ENCODE measurements at regions of chr4 and their contacts with region 1.

Region 1: DNA sequence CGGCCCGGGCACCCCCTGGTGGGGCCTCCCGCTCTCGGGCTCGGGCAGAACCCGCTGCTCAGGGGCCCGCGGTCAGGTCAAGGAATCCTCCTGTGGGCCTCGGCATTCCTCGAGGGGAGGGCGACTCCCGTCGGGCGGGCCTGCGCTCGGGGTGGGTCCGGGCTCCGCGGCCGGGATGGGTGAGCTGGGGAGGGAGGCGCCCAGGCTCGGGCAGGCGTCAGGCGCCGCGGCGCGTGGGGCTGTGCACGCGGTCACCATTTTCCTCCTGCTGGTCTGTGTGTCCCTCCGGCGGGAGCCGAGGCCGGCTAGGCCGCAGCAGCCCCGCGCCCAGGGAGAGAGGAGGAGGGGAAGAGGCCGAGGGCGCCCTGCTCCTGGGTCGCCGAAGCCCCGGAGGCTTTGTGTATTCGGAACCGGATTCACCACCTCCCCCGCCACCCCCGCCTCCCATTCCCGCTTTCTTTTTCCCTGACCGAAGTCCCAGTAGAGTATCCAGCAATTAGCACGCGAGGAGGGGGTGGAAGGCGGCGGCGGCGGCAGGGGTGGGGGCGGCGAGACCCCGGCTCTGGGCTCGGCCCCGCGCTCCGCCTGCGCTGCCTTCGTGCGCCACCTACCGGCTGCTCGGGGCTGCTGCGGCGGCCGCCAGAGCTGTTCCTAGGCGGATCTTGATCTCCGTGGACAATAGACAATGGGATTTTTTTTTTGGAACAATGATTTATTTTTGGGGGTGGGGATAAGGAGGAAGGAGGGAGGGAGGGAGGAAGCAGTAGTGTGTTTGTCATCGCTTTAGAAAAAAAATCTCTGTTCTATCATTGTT is 99.0 kb upstream of the MAML3 start:
- ATAC-seq: peak; percentile 82 to 90 (median 87)
- H3K4me3 ChIP-seq: peak overlapping the region; percentile 19 to 28 (median 21)
- H3K27ac ChIP-seq: peak overlapping the region; percentile 92 to 95
- H3K4me1 ChIP-seq: peaks cover 54 to 66% of the 10 kb centered on the region in 2 donors

Region 2: GRCh38 chr4:139950568-139950967 is 302.4 kb before region 1 on chr4:
- in situ Hi-C with region 1: no loop called
- ATAC-seq: no peak
- H3K4me3 ChIP-seq: no peak overlapping the region
- H3K27ac ChIP-seq: no peak overlapping the region
- H3K4me1 ChIP-seq: peaks cover 0 to 15% of the 10 kb centered on the region in 2 donors

Region 3: GRCh38 chr4:139988863-139989733 is 263.9 kb before region 1 on chr4:
- in situ Hi-C with region 1: no loop called
- ATAC-seq: peak in 7 of 8 experiments; percentile 68 to 98 (median 91)
- H3K4me3 ChIP-seq: no peak overlapping the region
- H3K27ac ChIP-seq: no peak overlapping the region
- H3K4me1 ChIP-seq: peaks cover 23 to 30% of the 10 kb centered on the region in 2 donors

Region 4: GRCh38 chr4:140012688-140013486 is 240.1 kb before region 1 on chr4:
- in situ Hi-C with region 1: loop called in 1 of 9 experiments (anchors 25 kb)
- ATAC-seq: peak; percentile 58 to 97 (median 87)
- H3K4me3 ChIP-seq: no peak overlapping the region
- H3K27ac ChIP-seq: no peak overlapping the region
- H3K4me1 ChIP-seq: peaks cover 7 to 22% of the 10 kb centered on the region in 2 donors

Region 5: GRCh38 chr4:140049024-140049848 is 203.7 kb before region 1 on chr4:
- in situ Hi-C with region 1: loop called in 1 of 9 experiments (anchors 25 kb)
- ATAC-seq: peak; percentile 84 to 98 (median 96)
- H3K4me3 ChIP-seq: peak overlapping the region; percentile 10 to 31 (median 18)
- H3K27ac ChIP-seq: peak overlapping the region; percentile 76 to 83
- H3K4me1 ChIP-seq: peaks cover 48 to 61% of the 10 kb centered on the region in 2 donors

Region 6: GRCh38 chr4:140153718-140154571 is 99.0 kb before region 1 on chr4 and contains the start of gene MAML3:
- in situ Hi-C with region 1: loop called in 2 of 9 experiments (anchors 5 to 10 kb)
- ATAC-seq: peak; percentile 45 to 75 (median 62)
- H3K4me3 ChIP-seq: peak within 1 kb of the TSS; percentile 55 to 90 (median 72)
- H3K27ac ChIP-seq: peak within 1 kb of the TSS; percentile 94 to 97
- H3K4me1 ChIP-seq: peaks cover 4 to 9% of the 10 kb centered on the region in 2 donors
- total RNA-seq, gene MAML3: 1.7 to 24.0 (median 12.9) TPM